ENCODE measurements at regions of chr1 and their contacts with region 1.

Region 1: DNA sequence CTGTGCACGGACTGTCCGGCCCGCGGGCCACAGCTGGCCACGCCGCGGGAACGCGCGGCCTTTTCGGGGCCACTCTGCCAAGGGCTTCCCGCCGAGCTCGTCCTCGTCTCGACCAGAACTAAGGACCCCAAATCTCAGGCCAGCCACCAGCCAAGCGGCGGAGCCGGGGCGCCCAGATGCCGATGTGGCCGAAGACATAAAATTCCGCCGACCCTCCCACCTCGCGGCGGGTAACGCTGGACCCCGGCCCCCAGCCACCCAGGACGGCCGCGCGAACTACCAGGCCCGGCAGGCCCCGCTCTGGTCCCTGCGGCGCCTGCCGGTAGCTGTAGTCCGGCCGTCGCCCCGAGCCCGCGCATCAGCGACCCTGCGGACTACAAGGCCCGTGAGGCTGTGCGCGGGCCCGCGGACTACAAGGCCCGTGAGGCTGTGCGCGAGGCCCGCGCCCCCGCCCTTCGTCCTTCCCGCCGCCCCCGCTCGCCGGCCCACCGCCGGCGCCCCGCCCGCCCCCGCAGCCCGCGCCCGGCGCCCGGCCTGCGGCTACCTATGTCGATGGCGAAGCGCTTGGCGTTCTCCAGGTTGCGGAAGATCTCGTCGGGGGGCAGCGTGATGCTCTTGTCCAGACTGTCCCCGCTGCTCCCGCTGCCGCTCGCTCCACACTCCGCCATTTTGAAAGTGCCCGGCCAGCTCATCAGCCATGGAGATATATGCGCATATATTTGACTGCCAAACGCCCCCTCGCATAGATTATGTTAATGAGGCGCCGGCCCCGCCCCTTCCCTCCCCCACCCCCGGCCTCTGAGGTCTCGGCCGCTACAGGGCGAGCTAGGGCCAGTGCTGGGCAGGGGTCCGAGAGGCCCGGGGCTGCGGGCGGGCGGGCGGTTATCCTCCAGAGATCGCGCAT is at the start of gene PANK4:
- DNase-seq: peak; percentile 76 to 96 (median 87)
- ATAC-seq: peak; percentile 89
- H3K4me3 ChIP-seq: peak within 1 kb of the TSS; percentile 84
- H3K4me3 Mint-ChIP-seq: peak within 1 kb of the TSS; percentile 90
- H3K27ac ChIP-seq: peak within 1 kb of the TSS; percentile 76
- H3K27ac Mint-ChIP-seq: peak within 1 kb of the TSS; percentile 91
- H3K4me1 ChIP-seq: peaks cover 75% of the 10 kb centered on the region
- H3K4me1 Mint-ChIP-seq: peaks cover 55% of the 10 kb centered on the region
- H3K27me3 ChIP-seq: peaks cover 19 to 23% of the 10 kb centered on the region in 2 experiments
- H3K27me3 Mint-ChIP-seq: peaks cover 19% of the 10 kb centered on the region
- CTCF ChIP-seq: no peak
- total RNA-seq, gene PANK4: 42.9 to 47.0 TPM

Region 2: GRCh38 chr1:2205191-2205952 is 320.8 kb before region 1 on chr1:
- CTCF ChIA-PET with region 1: no interaction called
- POLR2A ChIA-PET with region 1: no interaction called
- intact Hi-C with region 1: loop called in 1 of 2 experiments (anchors 5 kb)
- DNase-seq: peak; percentile 91 to 97 (median 96)
- ATAC-seq: peak; percentile 92
- H3K4me3 ChIP-seq: peak overlapping the region; percentile 42
- H3K4me3 Mint-ChIP-seq: peak overlapping the region; percentile 68
- H3K27ac ChIP-seq: peak overlapping the region in 1 of 2 donors; percentile 35
- H3K27ac Mint-ChIP-seq: no peak overlapping the region
- H3K4me1 ChIP-seq: peaks cover 28% of the 10 kb centered on the region
- H3K4me1 Mint-ChIP-seq: peaks cover 5% of the 10 kb centered on the region
- H3K27me3 ChIP-seq: no peaks in the 10 kb centered on the region
- H3K27me3 Mint-ChIP-seq: no peaks in the 10 kb centered on the region
- CTCF ChIP-seq: no peak

Region 3: DNA sequence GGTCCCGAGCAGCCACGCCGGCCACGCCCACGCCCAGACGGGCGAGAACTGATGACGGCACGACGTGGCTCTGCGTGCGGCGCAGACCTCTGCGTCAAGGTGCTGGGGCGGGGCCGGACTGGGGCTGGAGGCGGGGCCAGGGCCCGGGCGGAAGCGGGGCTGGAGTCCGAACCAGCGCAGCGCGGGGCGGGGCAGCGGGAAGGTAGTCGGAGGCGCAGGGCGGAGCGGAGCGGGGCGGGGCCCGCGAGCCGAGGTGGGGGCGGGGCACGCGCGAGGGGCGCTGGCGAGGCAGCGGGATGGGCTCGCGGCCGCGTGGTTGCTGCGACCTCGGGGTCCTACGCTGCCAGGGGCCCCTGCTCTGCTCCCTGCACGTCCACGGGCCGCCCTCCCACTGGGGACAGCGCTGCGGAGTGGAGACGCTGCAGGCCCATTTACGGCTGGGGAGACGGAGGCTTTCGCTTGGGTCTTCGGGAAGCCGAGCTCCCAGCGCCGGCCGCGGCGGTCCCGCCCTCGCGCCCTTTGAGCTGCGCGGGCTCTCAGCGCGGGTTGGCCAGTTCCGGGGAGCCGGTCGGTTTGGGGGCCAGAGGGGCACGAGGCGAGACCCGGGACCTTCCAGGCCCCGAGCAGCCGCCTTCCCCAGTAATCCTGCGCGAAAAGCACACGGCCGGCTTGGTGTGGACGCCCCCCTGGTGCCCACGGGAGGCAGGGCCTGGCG is 113.5 kb before region 1 on chr1 and contains the start of gene PEX10:
- CTCF ChIA-PET with region 1: interaction called, 5 read pairs
- POLR2A ChIA-PET with region 1: interaction called, 12 read pairs
- intact Hi-C with region 1: loop called (anchors 1 kb)
- DNase-seq: peak; percentile 95 to 99 (median 98)
- ATAC-seq: peak; percentile 89
- H3K4me3 ChIP-seq: peak within 1 kb of the TSS; percentile 67
- H3K4me3 Mint-ChIP-seq: peak within 1 kb of the TSS; percentile 94
- H3K27ac ChIP-seq: peak within 1 kb of the TSS; percentile 69 to 72
- H3K27ac Mint-ChIP-seq: peak within 1 kb of the TSS; percentile 92
- H3K4me1 ChIP-seq: peaks cover 57% of the 10 kb centered on the region
- H3K4me1 Mint-ChIP-seq: peaks cover 32% of the 10 kb centered on the region
- H3K27me3 ChIP-seq: no peaks in the 10 kb centered on the region
- H3K27me3 Mint-ChIP-seq: no peaks in the 10 kb centered on the region
- CTCF ChIP-seq: no peak
- total RNA-seq, gene PEX10: 12.0 to 12.5 TPM

Region 4: DNA sequence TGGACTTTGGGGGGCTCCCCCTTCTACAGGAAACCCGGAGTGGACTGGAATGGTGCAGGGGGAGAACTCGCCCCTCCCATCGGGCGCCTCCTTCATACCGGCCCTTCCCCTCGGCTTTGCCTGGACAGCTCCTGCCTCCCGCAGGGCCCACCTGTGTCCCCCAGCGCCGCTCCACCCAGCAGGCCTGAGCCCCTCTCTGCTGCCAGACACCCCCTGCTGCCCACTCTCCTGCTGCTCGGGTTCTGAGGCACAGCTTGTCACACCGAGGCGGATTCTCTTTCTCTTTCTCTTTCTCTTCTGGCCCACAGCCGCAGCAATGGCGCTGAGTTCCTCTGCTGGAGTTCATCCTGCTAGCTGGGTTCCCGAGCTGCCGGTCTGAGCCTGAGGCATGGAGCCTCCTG is 30.1 kb after region 1 on chr1 and contains the start of gene TNFRSF14:
- CTCF ChIA-PET with region 1: interaction called, 5 read pairs
- POLR2A ChIA-PET with region 1: interaction called, 11 read pairs
- intact Hi-C with region 1: no loop called
- DNase-seq: peak; percentile 54 to 90 (median 62)
- ATAC-seq: peak; percentile 79
- H3K4me3 ChIP-seq: peak within 1 kb of the TSS; percentile 99
- H3K4me3 Mint-ChIP-seq: peak within 1 kb of the TSS; percentile 97
- H3K27ac ChIP-seq: peak within 1 kb of the TSS; percentile 96
- H3K27ac Mint-ChIP-seq: peak within 1 kb of the TSS; percentile 98
- H3K4me1 ChIP-seq: peaks cover 59% of the 10 kb centered on the region
- H3K4me1 Mint-ChIP-seq: peaks cover 35% of the 10 kb centered on the region
- H3K27me3 ChIP-seq: no peaks in the 10 kb centered on the region
- H3K27me3 Mint-ChIP-seq: no peaks in the 10 kb centered on the region
- CTCF ChIP-seq: peak; percentile 24
- total RNA-seq, gene TNFRSF14: 191 to 194 TPM

Region 5: GRCh38 chr1:2586154-2587070 is 60.2 kb after region 1 on chr1 and contains the start of gene PRXL2B:
- CTCF ChIA-PET with region 1: interaction called, 5 read pairs
- POLR2A ChIA-PET with region 1: interaction called, 31 read pairs
- intact Hi-C with region 1: loop called (anchors 1 kb)
- DNase-seq: peak; percentile 92 to 99 (median 97)
- ATAC-seq: peak; percentile 61
- H3K4me3 ChIP-seq: peak within 1 kb of the TSS; percentile 85
- H3K4me3 Mint-ChIP-seq: peak within 1 kb of the TSS; percentile 99
- H3K27ac ChIP-seq: peak within 1 kb of the TSS; percentile 97 to 99
- H3K27ac Mint-ChIP-seq: peak within 1 kb of the TSS; percentile 98
- H3K4me1 ChIP-seq: peaks cover 62% of the 10 kb centered on the region
- H3K4me1 Mint-ChIP-seq: peaks cover 38% of the 10 kb centered on the region
- H3K27me3 ChIP-seq: no peaks in the 10 kb centered on the region
- H3K27me3 Mint-ChIP-seq: no peaks in the 10 kb centered on the region
- CTCF ChIP-seq: no peak
- total RNA-seq, gene PRXL2B: 11.0 to 12.8 TPM

Region 6: GRCh38 chr1:3772027-3772714 is 1246.0 kb after region 1 on chr1:
- CTCF ChIA-PET with region 1: no interaction called
- POLR2A ChIA-PET with region 1: no interaction called
- intact Hi-C with region 1: loop called in 1 of 2 experiments (anchors 10 kb)
- DNase-seq: peak; percentile 73 to 97 (median 88)
- ATAC-seq: peak; percentile 77
- H3K4me3 ChIP-seq: peak overlapping the region; percentile 55
- H3K4me3 Mint-ChIP-seq: peak overlapping the region; percentile 80
- H3K27ac ChIP-seq: no peak overlapping the region
- H3K27ac Mint-ChIP-seq: no peak overlapping the region
- H3K4me1 ChIP-seq: peaks cover 33% of the 10 kb centered on the region
- H3K4me1 Mint-ChIP-seq: peaks cover 5% of the 10 kb centered on the region
- H3K27me3 ChIP-seq: no peaks in the 10 kb centered on the region
- H3K27me3 Mint-ChIP-seq: peaks cover 5% of the 10 kb centered on the region
- CTCF ChIP-seq: no peak

Measured in CD4-positive, alpha-beta T cell (primary cell).